CD8-positive, alpha-beta T cell (primary cell): ENCODE measurements at regions of chr6 and their contacts with region 1.

Region 1: DNA sequence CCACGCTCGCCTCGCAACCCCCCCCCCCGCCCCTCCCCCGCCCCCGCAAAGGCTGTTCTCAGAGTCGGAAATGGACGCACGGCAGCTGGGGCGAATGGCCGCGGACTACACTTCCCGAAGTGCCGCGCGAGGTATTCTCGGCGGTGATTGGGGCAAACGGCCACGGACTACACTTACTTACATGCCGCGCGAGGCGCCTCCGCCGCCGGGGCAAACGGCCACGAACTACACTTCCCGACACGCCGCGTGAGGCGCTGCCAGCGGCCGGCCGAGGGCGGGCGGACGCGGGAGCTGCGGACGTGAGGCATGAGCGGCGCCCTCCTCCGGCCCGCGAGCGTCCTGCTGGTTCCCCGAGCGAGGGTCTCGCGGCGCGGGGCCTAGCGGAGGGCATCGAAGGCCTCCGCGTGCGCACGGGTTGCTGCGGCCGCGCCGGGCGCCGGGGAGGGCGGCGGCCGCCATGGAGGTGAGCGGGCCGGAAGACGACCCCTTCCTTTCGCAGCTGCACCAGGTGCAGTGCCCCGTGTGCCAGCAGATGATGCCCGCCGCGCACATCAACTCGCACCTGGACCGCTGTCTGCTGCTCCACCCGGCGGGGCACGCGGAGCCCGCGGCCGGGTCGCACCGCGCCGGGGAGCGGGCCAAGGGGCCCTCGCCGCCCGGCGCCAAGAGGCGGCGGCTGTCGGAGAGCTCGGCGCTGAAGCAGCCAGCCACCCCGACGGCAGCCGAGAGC is at the start of gene WRNIP1:
- DNase-seq: peak; percentile 93 to 99 (median 96)
- ATAC-seq: peak; percentile 84
- H3K4me3 ChIP-seq: peak within 1 kb of the TSS; percentile 72 to 76
- H3K4me3 Mint-ChIP-seq: peak within 1 kb of the TSS; percentile 95
- H3K27ac ChIP-seq: peak within 1 kb of the TSS; percentile 88 to 97
- H3K27ac Mint-ChIP-seq: peak within 1 kb of the TSS; percentile 99
- H3K4me1 ChIP-seq: peaks cover 43% of the 10 kb centered on the region
- H3K4me1 Mint-ChIP-seq: peaks cover 47% of the 10 kb centered on the region
- H3K27me3 ChIP-seq: no peaks in the 10 kb centered on the region
- H3K27me3 Mint-ChIP-seq: no peaks in the 10 kb centered on the region
- CTCF ChIP-seq: peak; percentile 35
- total RNA-seq, gene WRNIP1: 21.3 to 23.0 TPM

Region 2: GRCh38 chr6:2245094-2245876 is 520.0 kb before region 1 on chr6 and contains the start of gene GMDS:
- CTCF ChIA-PET with region 1: interaction called, 3 read pairs
- POLR2A ChIA-PET with region 1: no interaction called
- intact Hi-C with region 1: loop called in 1 of 2 experiments (anchors 5 kb)
- DNase-seq: peak; percentile 70 to 94 (median 80)
- ATAC-seq: peak; percentile 93
- H3K4me3 ChIP-seq: peak within 1 kb of the TSS; percentile 86 to 90
- H3K4me3 Mint-ChIP-seq: peak within 1 kb of the TSS; percentile 91
- H3K27ac ChIP-seq: peak within 1 kb of the TSS; percentile 81 to 86
- H3K27ac Mint-ChIP-seq: peak within 1 kb of the TSS; percentile 94
- H3K4me1 ChIP-seq: peaks cover 24% of the 10 kb centered on the region
- H3K4me1 Mint-ChIP-seq: peaks cover 61% of the 10 kb centered on the region
- H3K27me3 ChIP-seq: no peaks in the 10 kb centered on the region
- H3K27me3 Mint-ChIP-seq: no peaks in the 10 kb centered on the region
- CTCF ChIP-seq: no peak
- total RNA-seq, gene GMDS: 14.1 to 18.5 TPM

Region 3: DNA sequence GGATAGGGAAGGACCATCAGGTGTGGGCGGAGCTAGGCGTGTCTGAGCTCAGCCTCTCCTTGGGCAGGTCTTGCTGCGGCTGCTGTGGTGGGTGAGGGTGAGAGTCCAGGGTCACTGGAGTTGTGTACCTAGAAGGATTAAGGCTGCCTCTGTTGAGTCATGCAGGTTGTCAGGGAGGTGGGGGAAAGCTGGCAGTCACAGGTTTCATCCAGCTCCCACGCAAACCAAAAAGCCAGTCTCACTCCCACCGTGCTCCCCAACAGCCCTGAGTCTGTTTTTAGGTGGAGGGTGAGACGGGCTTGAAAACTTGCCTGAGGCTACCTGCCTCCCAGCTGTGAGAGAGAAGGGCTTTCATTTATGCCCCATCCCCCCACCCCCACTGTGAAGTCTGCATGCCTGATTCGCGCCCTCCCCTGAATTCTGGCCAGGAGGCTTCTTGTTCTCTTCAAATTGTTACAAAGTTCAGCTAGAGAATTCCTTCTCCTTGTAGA is 176.1 kb before region 1 on chr6:
- CTCF ChIA-PET with region 1: no interaction called
- POLR2A ChIA-PET with region 1: no interaction called
- intact Hi-C with region 1: no loop called
- DNase-seq: no peak
- ATAC-seq: no peak
- H3K4me3 ChIP-seq: no peak overlapping the region
- H3K4me3 Mint-ChIP-seq: no peak overlapping the region
- H3K27ac ChIP-seq: no peak overlapping the region
- H3K27ac Mint-ChIP-seq: no peak overlapping the region
- H3K4me1 ChIP-seq: no peaks in the 10 kb centered on the region
- H3K4me1 Mint-ChIP-seq: no peaks in the 10 kb centered on the region
- H3K27me3 ChIP-seq: no peaks in the 10 kb centered on the region
- H3K27me3 Mint-ChIP-seq: peaks cover 9% of the 10 kb centered on the region
- CTCF ChIP-seq: no peak

Region 4: DNA sequence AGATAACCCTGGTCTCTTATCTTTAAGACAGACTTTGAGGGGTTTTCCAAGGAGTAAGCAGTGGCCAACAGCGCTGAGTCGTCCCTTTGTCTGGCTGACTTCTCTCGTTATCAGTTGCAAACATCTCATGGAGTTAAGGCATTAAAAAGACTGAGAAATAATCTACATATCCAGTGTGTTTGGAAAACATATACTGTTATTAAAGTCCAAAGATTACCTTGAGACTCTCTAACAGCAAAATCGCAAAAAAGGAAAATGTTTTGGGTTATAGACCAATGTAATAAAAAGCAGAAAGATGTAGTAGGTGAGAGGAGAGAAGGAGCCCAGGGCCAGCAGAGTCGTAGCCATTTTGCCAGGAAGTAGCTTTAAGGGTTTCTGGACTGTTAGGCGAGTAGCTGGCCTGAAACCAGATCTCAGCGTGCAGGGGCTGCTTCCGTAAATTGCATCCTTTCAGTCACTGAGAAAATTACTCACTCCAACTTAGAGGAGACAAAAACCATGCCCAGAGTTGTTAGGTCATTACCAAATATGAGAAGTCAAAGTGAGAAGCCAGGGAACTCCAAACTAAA is 39.2 kb before region 1 on chr6:
- CTCF ChIA-PET with region 1: no interaction called
- POLR2A ChIA-PET with region 1: no interaction called
- intact Hi-C with region 1: no loop called
- DNase-seq: peak in 1 of 9 experiments; percentile 24
- ATAC-seq: no peak
- H3K4me3 ChIP-seq: no peak overlapping the region
- H3K4me3 Mint-ChIP-seq: no peak overlapping the region
- H3K27ac ChIP-seq: no peak overlapping the region
- H3K27ac Mint-ChIP-seq: no peak overlapping the region
- H3K4me1 ChIP-seq: no peaks in the 10 kb centered on the region
- H3K4me1 Mint-ChIP-seq: no peaks in the 10 kb centered on the region
- H3K27me3 ChIP-seq: no peaks in the 10 kb centered on the region
- H3K27me3 Mint-ChIP-seq: peaks cover 4% of the 10 kb centered on the region
- CTCF ChIP-seq: no peak

Region 5: GRCh38 chr6:2749969-2750600 is 15.2 kb before region 1 on chr6:
- CTCF ChIA-PET with region 1: interaction called, 78 read pairs
- POLR2A ChIA-PET with region 1: interaction called, 4 read pairs
- intact Hi-C with region 1: loop called in 1 of 2 experiments (anchors 1 kb)
- DNase-seq: peak; percentile 46 to 78 (median 71)
- ATAC-seq: peak; percentile 86
- H3K4me3 ChIP-seq: no peak overlapping the region
- H3K4me3 Mint-ChIP-seq: no peak overlapping the region
- H3K27ac ChIP-seq: no peak overlapping the region
- H3K27ac Mint-ChIP-seq: no peak overlapping the region
- H3K4me1 ChIP-seq: peaks cover 8% of the 10 kb centered on the region
- H3K4me1 Mint-ChIP-seq: peaks cover 6% of the 10 kb centered on the region
- H3K27me3 ChIP-seq: peaks cover 0 to 2% of the 10 kb centered on the region in 2 experiments
- H3K27me3 Mint-ChIP-seq: peaks cover 5% of the 10 kb centered on the region
- CTCF ChIP-seq: peak; percentile 99

Region 6: GRCh38 chr6:2900821-2901644 is 135.7 kb after region 1 on chr6:
- CTCF ChIA-PET with region 1: no interaction called
- POLR2A ChIA-PET with region 1: no interaction called
- intact Hi-C with region 1: loop called in 1 of 2 experiments (anchors 5 kb)
- DNase-seq: peak in 1 of 9 experiments; percentile 46
- ATAC-seq: no peak
- H3K4me3 ChIP-seq: peak overlapping the region; percentile 73 to 90
- H3K4me3 Mint-ChIP-seq: peak overlapping the region; percentile 99
- H3K27ac ChIP-seq: peak overlapping the region; percentile 67 to 82
- H3K27ac Mint-ChIP-seq: peak overlapping the region; percentile 96
- H3K4me1 ChIP-seq: peaks cover 37% of the 10 kb centered on the region
- H3K4me1 Mint-ChIP-seq: peaks cover 60% of the 10 kb centered on the region
- H3K27me3 ChIP-seq: no peaks in the 10 kb centered on the region
- H3K27me3 Mint-ChIP-seq: no peaks in the 10 kb centered on the region
- CTCF ChIP-seq: no peak

Region 7: GRCh38 chr6:3068329-3069214 is 303.2 kb after region 1 on chr6 and contains the start of gene RIPK1:
- CTCF ChIA-PET with region 1: no interaction called
- POLR2A ChIA-PET with region 1: interaction called, 7 read pairs
- intact Hi-C with region 1: loop called (anchors 1 kb)
- DNase-seq: peak; percentile 85 to 98 (median 93)
- ATAC-seq: peak; percentile 74
- H3K4me3 ChIP-seq: peak within 1 kb of the TSS; percentile 67 to 95
- H3K4me3 Mint-ChIP-seq: peak within 1 kb of the TSS; percentile 98
- H3K27ac ChIP-seq: peak within 1 kb of the TSS; percentile 93 to 96
- H3K27ac Mint-ChIP-seq: peak within 1 kb of the TSS; percentile 99
- H3K4me1 ChIP-seq: peaks cover 39% of the 10 kb centered on the region
- H3K4me1 Mint-ChIP-seq: peaks cover 62% of the 10 kb centered on the region
- H3K27me3 ChIP-seq: no peaks in the 10 kb centered on the region
- H3K27me3 Mint-ChIP-seq: no peaks in the 10 kb centered on the region
- CTCF ChIP-seq: peak; percentile 33
- total RNA-seq, gene RIPK1: 18.6 to 19.7 TPM

Region 8: GRCh38 chr6:3162565-3163247 is 397.4 kb after region 1 on chr6:
- CTCF ChIA-PET with region 1: no interaction called
- POLR2A ChIA-PET with region 1: no interaction called
- intact Hi-C with region 1: loop called in 1 of 2 experiments (anchors 2 kb)
- DNase-seq: peak; percentile 12 to 84 (median 63)
- ATAC-seq: peak; percentile 47
- H3K4me3 ChIP-seq: peak overlapping the region; percentile 71 to 79
- H3K4me3 Mint-ChIP-seq: peak overlapping the region; percentile 84
- H3K27ac ChIP-seq: peak overlapping the region in 1 of 2 experiments; percentile 72
- H3K27ac Mint-ChIP-seq: peak overlapping the region; percentile 86
- H3K4me1 ChIP-seq: peaks cover 33% of the 10 kb centered on the region
- H3K4me1 Mint-ChIP-seq: peaks cover 37% of the 10 kb centered on the region
- H3K27me3 ChIP-seq: no peaks in the 10 kb centered on the region
- H3K27me3 Mint-ChIP-seq: no peaks in the 10 kb centered on the region
- CTCF ChIP-seq: no peak

Region 9: DNA sequence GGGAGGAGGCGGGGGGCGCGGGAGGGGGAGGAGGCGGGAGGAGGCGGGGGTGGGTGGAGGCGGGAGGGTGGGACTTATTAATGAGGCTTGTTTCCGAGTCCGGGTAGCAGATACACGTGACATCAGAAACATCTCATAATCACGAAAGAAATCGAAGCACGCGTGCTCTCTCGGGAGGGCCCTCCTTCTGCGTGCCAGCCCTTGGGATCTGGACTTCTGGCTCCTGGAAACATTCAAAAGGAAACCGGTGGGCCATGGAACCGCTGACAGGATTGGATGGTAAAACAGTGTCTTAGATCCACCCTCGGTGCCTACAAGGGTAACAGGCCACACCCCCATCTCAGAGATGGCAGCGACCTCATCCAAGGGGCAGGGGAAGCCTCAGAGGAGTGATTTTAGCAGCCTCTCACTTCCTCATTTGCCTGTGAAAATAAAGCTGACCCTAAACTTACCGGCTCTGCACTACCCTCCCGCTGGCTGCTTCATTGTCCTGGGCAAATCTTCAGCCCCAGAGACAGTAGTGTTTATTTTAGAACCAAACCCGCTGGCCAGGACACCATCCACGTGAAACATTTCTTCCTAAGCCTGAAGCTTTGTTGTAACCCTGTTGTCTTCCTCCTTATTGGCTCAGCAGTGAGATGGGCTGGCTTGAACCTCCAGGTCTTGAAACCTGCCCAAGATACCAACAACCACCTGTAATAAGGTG is 590.9 kb after region 1 on chr6:
- CTCF ChIA-PET with region 1: no interaction called
- POLR2A ChIA-PET with region 1: no interaction called
- intact Hi-C with region 1: loop called (anchors 2 to 10 kb)
- DNase-seq: peak; percentile 35 to 90 (median 66)
- ATAC-seq: peak; percentile 87
- H3K4me3 ChIP-seq: peak overlapping the region; percentile 51 to 58
- H3K4me3 Mint-ChIP-seq: peak overlapping the region; percentile 81
- H3K27ac ChIP-seq: peak overlapping the region; percentile 48 to 79
- H3K27ac Mint-ChIP-seq: peak overlapping the region; percentile 90
- H3K4me1 ChIP-seq: peaks cover 27% of the 10 kb centered on the region
- H3K4me1 Mint-ChIP-seq: peaks cover 33% of the 10 kb centered on the region
- H3K27me3 ChIP-seq: no peaks in the 10 kb centered on the region
- H3K27me3 Mint-ChIP-seq: no peaks in the 10 kb centered on the region
- CTCF ChIP-seq: no peak